Activated CD8-positive, alpha-beta memory T cell treated with anti-CD3 and anti-CD28 coated beads, Interleukin-2, amount 10 ng/mL, durations not matched to agents 7 days and 5 days (primary cell): ENCODE measurements at regions of chr14 and their contacts with region 1.

Region 1: GRCh38 chr14:64880221-64881121 is 764 bp upstream of the SPTB start:
- DNase-seq: peak; percentile 67
- ATAC-seq: peak; percentile 94
- H3K4me3 Mint-ChIP-seq: peak overlapping the region; percentile 73
- H3K27ac Mint-ChIP-seq: no peak overlapping the region
- H3K4me1 Mint-ChIP-seq: peaks cover 13% of the 10 kb centered on the region
- H3K27me3 Mint-ChIP-seq: peaks cover 77% of the 10 kb centered on the region

Region 2: GRCh38 chr14:64823305-64823861 is 57.1 kb before region 1 on chr14:
- CTCF ChIA-PET with region 1: interaction called, 24 read pairs
- DNase-seq: peak; percentile 74
- ATAC-seq: peak; percentile 85
- H3K4me3 Mint-ChIP-seq: no peak overlapping the region
- H3K27ac Mint-ChIP-seq: no peak overlapping the region
- H3K4me1 Mint-ChIP-seq: peaks cover 4% of the 10 kb centered on the region
- H3K27me3 Mint-ChIP-seq: peaks cover 41% of the 10 kb centered on the region